ENCODE measurements at regions of chr1 and their contacts with region 1.

Region 1: GRCh38 chr1:184497959-184498723 is 111.3 kb downstream of the C1orf21 start:
- DNase-seq: peak; percentile 36 to 60
- H3K4me3 ChIP-seq: peak overlapping the region in 1 of 4 experiments; percentile 21; a peak in 1 of 8 replicates
- H3K27ac ChIP-seq: no peak overlapping the region
- H3K4me1 ChIP-seq: peaks cover 0 to 30% (median 21%) of the 10 kb centered on the region in 4 experiments; a peak in 4 of 7 replicates
- H3K27me3 ChIP-seq: no peaks in the 10 kb centered on the region
- CTCF ChIP-seq: peak; percentile 33 to 55 (median 42); a peak in 3 of 4 replicates
- EP300 ChIP-seq: 0 out of 3 replicates have a peak, but pooled peaks of 1 of the 2 experiments have one; percentile 58
- POLR2A ChIP-seq: no peak
- RAD21 ChIP-seq: peak in 1 of 2 experiments; percentile 39; a peak in 2 of 4 replicates

Region 2: GRCh38 chr1:184513421-184513820 is 15.3 kb after region 1 on chr1:
- CTCF ChIA-PET with region 1: interaction called, 10 read pairs
- POLR2A ChIA-PET with region 1: no interaction called
- DNase-seq: no peak
- H3K4me3 ChIP-seq: no peak overlapping the region
- H3K27ac ChIP-seq: no peak overlapping the region
- H3K4me1 ChIP-seq: no peaks in the 10 kb centered on the region
- H3K27me3 ChIP-seq: no peaks in the 10 kb centered on the region
- CTCF ChIP-seq: no peak
- EP300 ChIP-seq: no peak
- POLR2A ChIP-seq: no peak
- RAD21 ChIP-seq: no peak

Region 3: DNA sequence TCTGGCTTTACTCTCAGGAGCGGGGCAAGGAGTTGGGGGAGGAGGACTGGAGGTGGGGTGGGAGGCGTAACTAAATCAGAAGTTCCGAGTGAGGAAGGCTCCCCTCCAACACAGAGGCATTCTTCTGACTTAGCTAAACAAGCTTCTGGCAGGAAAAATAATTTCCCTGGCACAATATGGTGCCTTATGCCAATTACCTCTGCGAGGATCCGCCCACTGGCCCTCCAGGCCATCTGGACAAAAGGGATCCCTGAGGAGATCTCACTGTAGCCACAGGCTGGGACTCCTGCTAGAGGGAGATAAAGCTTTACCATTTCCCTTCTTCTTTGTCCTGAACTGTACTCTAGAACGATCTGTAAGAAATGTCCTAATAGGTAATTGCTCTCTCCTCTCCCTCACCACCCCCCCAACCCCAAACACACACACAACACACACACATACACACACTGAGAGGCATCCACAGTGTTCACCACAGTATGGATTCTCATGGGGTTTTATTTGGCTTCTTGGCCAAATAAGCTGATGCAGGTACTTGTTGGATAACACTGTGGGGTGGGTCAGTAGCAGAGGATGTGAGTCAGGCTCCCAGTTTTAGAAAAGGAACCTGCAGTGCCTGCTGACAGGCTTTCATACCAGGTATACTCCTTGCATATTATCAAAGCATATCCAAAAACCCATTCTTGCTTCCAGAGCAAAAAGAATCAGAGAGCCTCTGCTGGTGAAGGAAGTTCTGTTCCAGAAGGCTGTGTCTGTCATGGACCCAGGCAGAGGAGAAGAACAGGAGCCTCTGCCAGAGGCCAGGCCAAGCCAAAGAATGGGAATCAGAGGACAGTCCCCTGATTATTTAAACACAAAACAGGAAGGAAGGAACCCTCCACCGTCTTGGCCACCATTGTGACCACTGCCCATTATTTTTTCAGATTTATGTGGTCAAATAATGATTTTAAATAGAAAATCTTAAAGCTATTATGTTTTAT is 57.8 kb after region 1 on chr1:
- CTCF ChIA-PET with region 1: no interaction called
- POLR2A ChIA-PET with region 1: no interaction called
- DNase-seq: no peak
- H3K4me3 ChIP-seq: no peak overlapping the region
- H3K27ac ChIP-seq: no peak overlapping the region
- H3K4me1 ChIP-seq: peaks cover 0 to 8% (median 1%) of the 10 kb centered on the region in 4 experiments; a peak in 4 of 7 replicates
- H3K27me3 ChIP-seq: no peaks in the 10 kb centered on the region
- CTCF ChIP-seq: no peak
- EP300 ChIP-seq: no peak
- POLR2A ChIP-seq: no peak
- RAD21 ChIP-seq: no peak

Measured in H1 (cell line).